Mammary epithelial cell (primary cell): ENCODE measurements at regions of chr10 and their contacts with region 1.

Region 1: DNA sequence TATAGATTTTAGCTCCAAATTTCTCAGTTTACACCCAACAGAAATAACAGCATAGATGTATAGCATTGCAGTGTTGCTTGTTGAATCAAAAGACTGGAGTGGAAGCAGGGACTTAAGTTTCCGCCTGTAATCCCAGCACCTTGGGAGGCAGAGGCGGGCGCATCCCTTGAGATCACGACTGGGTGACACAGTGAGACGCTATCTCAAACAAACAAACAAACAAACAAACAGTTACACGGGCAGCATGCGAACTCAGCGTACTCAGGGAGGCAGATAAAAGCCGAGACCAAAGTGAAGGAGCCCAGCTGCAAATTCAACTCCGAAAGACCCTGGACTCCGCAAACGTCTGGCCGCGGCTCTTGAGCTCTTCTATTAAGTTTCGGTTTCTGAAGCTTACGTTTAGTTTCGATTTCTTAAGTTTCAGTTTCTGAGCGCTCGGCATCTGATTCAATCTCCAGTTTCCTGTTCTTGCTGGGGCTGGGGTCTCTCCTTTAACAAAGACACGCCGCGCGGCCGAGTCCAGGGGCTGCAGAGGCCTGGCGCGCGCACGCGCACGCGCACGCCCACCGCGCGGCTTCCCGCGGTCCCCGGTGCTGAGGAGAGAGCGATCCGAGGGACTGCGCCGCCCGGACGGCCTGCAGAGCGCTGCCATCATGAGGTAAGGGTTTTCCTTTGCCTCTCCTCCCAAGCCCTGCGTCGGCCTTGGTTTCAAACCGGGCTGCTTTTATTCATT is at the start of gene IFIT5:
- DNase-seq: peak; percentile 71
- H3K4me3 ChIP-seq: peak within 1 kb of the TSS; percentile 60 to 75 (median 71)
- H3K27ac ChIP-seq: peak within 1 kb of the TSS; percentile 73
- H3K4me1 ChIP-seq: no peaks in the 10 kb centered on the region
- H3K27me3 ChIP-seq: no peaks in the 10 kb centered on the region
- CTCF ChIP-seq: no peak
- total RNA-seq, gene IFIT5: 7.6 to 11.2 TPM

Region 2: GRCh38 chr10:89391917-89392756 is 22.2 kb before region 1 on chr10 and contains the start of gene IFIT1:
- CTCF ChIA-PET with region 1: no interaction called
- dilution Hi-C with region 1: no loop called
- in situ Hi-C with region 1: no loop called
- intact Hi-C with region 1: loop called (anchors 1 kb)
- DNase-seq: peak; percentile 78
- H3K4me3 ChIP-seq: peak within 1 kb of the TSS; percentile 57 to 97 (median 89)
- H3K27ac ChIP-seq: peak within 1 kb of the TSS; percentile 81
- H3K4me1 ChIP-seq: peaks cover 14% of the 10 kb centered on the region
- H3K27me3 ChIP-seq: no peaks in the 10 kb centered on the region
- CTCF ChIP-seq: peak in 1 of 2 donors; percentile 18
- total RNA-seq, gene IFIT1: 0.50 to 1.2 TPM

Region 3: DNA sequence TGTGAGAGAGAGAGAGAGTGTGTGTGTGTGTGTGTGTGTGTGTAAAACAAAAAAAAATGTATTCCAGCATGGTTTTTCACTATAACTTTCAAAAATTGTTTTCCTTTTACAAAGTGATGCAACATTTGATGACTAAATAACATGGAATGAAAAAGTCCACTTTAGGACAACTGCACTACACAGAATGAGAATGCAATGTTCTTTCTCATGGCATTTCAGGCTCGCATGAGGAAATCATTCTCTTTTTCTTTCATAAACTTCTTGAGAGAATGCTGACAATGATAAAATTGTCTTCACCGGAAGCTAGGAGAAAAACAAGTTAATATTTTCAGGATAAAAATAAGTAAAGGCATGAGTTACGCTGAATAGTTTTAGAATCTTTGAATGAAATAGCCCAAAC is 67.3 kb after region 1 on chr10:
- CTCF ChIA-PET with region 1: no interaction called
- dilution Hi-C with region 1: no loop called
- in situ Hi-C with region 1: no loop called
- intact Hi-C with region 1: no loop called
- DNase-seq: peak; percentile 63
- H3K4me3 ChIP-seq: no peak overlapping the region
- H3K27ac ChIP-seq: peak overlapping the region; percentile 47
- H3K4me1 ChIP-seq: peaks cover 37% of the 10 kb centered on the region
- H3K27me3 ChIP-seq: no peaks in the 10 kb centered on the region
- CTCF ChIP-seq: no peak